ENCODE measurements at regions of chr19 and their contacts with region 1.

Region 1: DNA sequence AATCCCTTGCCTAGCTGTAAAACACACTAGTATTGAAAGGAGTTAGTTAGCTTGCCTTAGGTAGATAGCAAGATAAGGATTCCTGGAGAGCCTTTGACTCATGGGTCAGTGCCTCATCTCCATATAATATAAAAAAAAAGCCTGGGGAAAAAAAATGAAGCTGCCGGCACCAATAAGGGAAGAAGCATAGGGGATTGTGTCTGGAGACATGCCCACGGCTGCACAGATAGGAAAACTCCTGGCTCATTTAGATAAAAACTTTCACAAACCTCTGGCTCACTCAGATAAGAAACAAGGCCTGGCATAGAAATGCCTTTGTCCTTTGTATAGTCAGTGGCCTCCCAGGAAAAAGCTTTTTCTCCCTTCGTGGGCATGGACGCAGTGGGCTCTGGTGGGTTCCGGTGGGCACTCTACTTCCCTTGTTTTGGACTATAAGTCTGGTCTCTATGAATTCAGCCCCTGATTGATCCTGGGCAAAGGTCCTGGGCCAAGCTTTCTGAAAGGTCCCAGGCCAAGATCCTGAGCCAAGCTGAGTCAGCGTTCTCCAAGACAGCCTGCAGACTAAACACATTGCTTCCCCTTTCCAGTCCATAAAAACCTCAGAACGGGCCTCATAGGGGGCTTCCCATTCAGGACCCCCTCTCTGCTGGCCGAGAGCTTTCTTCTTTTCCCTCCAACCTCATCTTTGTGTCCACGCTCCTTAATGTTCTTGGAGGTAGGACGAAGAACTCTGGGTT is 4.9 kb upstream of the OR7A17 start:
- DNase-seq: peak in 1 of 6 donors; percentile 13
- ATAC-seq: peak in 2 of 4 donors; percentile 44 to 49
- H3K4me3 ChIP-seq: no peak overlapping the region
- H3K27ac ChIP-seq: no peak overlapping the region
- H3K4me1 ChIP-seq: peaks cover 0 to 5% (median 5%) of the 10 kb centered on the region in 3 donors
- H3K27me3 ChIP-seq: no peaks in the 10 kb centered on the region
- CTCF ChIP-seq: no peak

Region 2: GRCh38 chr19:14571695-14572490 is 318.9 kb before region 1 on chr19 and contains the start of gene NDUFB7:
- intact Hi-C with region 1: loop called in 1 of 3 experiments (anchors 10 kb)
- DNase-seq: peak; percentile 85 to 96 (median 88)
- ATAC-seq: peak; percentile 97 to 99 (median 98)
- H3K4me3 ChIP-seq: peak within 1 kb of the TSS; percentile 87 to 99 (median 93)
- H3K27ac ChIP-seq: peak within 1 kb of the TSS; percentile 57 to 75 (median 64)
- H3K4me1 ChIP-seq: peaks cover 6 to 12% (median 7%) of the 10 kb centered on the region in 3 donors
- H3K27me3 ChIP-seq: no peaks in the 10 kb centered on the region
- CTCF ChIP-seq: peak; percentile 28 to 55 (median 52)
- total RNA-seq, gene NDUFB7: 62.5 to 80.9 (median 71.7) TPM

Region 3: DNA sequence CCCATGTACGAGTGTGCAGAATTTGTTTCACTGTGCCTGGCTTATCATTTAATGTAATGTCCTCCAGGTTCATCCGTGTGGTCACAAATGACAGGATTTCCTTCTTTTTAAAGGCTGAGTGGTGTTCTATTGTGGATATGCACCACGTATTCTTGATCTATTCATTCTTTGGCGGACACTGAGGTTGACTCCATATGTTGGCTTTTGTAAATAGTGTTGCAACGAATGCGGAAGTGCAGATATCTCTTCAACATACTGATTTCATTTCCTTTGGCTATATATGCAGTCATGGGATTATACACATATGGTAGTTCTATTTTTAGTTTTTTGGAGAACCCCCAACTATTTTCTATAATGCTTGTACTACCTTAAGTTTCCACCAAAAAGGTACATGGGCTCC is 68.9 kb before region 1 on chr19:
- intact Hi-C with region 1: no loop called
- DNase-seq: no peak
- ATAC-seq: no peak
- H3K4me3 ChIP-seq: no peak overlapping the region
- H3K27ac ChIP-seq: no peak overlapping the region
- H3K4me1 ChIP-seq: no peaks in the 10 kb centered on the region
- H3K27me3 ChIP-seq: peaks cover 0 to 26% (median 0%) of the 10 kb centered on the region in 4 donors
- CTCF ChIP-seq: no peak

Measured in pancreas (tissue), 10 donors.